Mammary epithelial cell (primary cell): ENCODE measurements at regions of chr7 and their contacts with region 1.

Region 1: GRCh38 chr7:49839863-49840645 is 66.6 kb downstream of the VWC2 start:
- DNase-seq: no peak
- H3K4me3 ChIP-seq: no peak overlapping the region
- H3K27ac ChIP-seq: no peak overlapping the region
- H3K4me1 ChIP-seq: no peaks in the 10 kb centered on the region
- H3K27me3 ChIP-seq: peaks cover 3% of the 10 kb centered on the region
- CTCF ChIP-seq: no peak

Region 2: DNA sequence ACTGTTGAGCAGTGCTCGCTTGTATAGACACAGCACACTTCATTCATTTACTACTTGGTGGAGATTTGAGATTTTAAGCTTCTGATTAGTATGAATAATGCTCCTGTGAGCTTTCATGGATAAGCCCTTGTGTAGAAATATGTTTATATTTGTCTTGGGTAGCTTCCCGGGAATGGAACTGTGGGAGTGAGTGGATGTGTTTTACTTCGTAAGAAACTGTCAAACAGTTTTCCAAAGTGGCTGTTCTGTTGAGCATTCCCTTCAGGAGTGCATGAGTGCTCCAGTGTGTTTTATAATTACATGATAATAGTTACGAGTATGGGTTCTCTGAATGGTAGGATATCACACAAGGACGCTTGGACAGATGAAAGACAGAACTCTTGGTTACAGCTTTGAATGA is 17.2 kb before region 1 on chr7:
- CTCF ChIA-PET with region 1: no interaction called
- dilution Hi-C with region 1: no loop called
- in situ Hi-C with region 1: no loop called
- intact Hi-C with region 1: loop called (anchors 1 kb)
- DNase-seq: no peak
- H3K4me3 ChIP-seq: no peak overlapping the region
- H3K27ac ChIP-seq: no peak overlapping the region
- H3K4me1 ChIP-seq: no peaks in the 10 kb centered on the region
- H3K27me3 ChIP-seq: no peaks in the 10 kb centered on the region
- CTCF ChIP-seq: no peak

Region 3: GRCh38 chr7:49894543-49894942 is 54.5 kb after region 1 on chr7:
- CTCF ChIA-PET with region 1: no interaction called
- dilution Hi-C with region 1: no loop called
- in situ Hi-C with region 1: no loop called
- intact Hi-C with region 1: no loop called
- DNase-seq: no peak
- H3K4me3 ChIP-seq: no peak overlapping the region
- H3K27ac ChIP-seq: no peak overlapping the region
- H3K4me1 ChIP-seq: no peaks in the 10 kb centered on the region
- H3K27me3 ChIP-seq: no peaks in the 10 kb centered on the region
- CTCF ChIP-seq: no peak